ENCODE measurements at regions of chr19 and their contacts with region 1.

Region 1: GRCh38 chr19:48724796-48725753 is 5.5 kb upstream of the MAMSTR start:
- DNase-seq: peak; percentile 71 to 82 (median 73)
- H3K4me3 ChIP-seq: no peak overlapping the region
- H3K27ac ChIP-seq: peak overlapping the region in 1 of 2 donors; percentile 63
- H3K4me1 ChIP-seq: peaks cover 13% of the 10 kb centered on the region
- H3K27me3 ChIP-seq: no peaks in the 10 kb centered on the region
- CTCF ChIP-seq: no peak
- EP300 ChIP-seq: no peak
- POLR2A ChIP-seq: no peak

Region 2: DNA sequence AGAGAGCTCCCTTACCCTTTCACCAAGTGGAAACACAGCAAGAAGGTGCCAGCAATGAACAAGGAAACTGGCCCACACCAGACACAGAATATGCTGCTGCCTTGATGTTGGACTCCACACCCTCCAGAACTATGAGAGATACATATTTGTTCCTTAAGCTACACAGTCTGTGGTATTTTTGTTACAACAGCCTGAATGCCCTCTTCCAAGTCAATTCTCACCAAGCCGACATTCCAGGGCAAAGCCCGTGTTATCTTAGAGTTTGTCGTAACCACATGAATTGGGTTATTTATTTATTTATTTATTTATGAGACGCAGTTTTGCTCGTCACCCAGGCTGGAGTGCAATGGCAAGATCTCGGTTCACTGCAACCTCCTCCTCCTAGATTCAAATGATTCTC is 45.2 kb after region 1 on chr19:
- intact Hi-C with region 1: loop called in 1 of 4 experiments (anchors 1 kb)
- DNase-seq: no peak
- H3K4me3 ChIP-seq: no peak overlapping the region
- H3K27ac ChIP-seq: no peak overlapping the region
- H3K4me1 ChIP-seq: peaks cover 8% of the 10 kb centered on the region
- H3K27me3 ChIP-seq: no peaks in the 10 kb centered on the region
- CTCF ChIP-seq: no peak
- EP300 ChIP-seq: no peak
- POLR2A ChIP-seq: no peak

Measured in ovary (tissue), 10 donors.